ENCODE measurements at regions of chr11 and their contacts with region 1.

Region 1: DNA sequence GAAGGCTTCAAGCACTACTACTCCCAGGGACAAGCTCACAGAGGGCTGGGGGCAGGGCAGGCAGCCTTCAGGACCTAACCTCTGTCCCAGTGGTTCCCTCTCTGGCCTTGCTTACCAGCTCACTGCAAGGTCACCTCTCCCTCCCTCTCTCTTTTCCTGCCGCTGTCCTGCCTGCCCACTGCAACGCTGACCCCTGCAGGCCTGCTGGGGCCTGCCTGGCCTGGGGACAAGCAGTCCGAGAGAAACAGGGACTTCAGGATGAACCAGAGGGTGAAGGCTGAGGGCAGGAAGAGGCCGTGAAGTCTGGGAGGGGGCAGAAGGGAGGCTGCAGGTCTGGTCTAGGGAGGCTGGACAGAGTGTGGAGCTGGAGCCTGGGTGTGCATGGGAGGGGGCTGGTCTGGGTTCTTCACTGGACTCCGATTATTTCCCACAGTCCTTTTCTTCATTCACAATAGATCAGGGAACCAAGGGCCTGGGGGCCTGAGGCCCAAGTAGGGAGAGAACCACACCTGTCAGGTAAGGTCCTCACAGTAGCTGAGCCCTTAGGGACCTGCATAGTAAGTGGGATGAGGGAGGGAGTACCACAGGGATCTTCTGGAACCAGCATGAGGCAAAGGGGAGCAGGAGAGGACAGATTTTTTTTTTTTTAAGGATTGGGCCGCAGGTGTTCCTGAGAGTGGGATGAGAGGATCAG is 3.0 kb downstream of the SYT7 start:
- DNase-seq: no peak
- H3K4me3 ChIP-seq: no peak overlapping the region
- H3K27ac ChIP-seq: no peak overlapping the region
- H3K4me1 ChIP-seq: peaks cover 0 to 15% (median 5%) of the 10 kb centered on the region in 4 experiments
- H3K27me3 ChIP-seq: peaks cover 0 to 52% (median 27%) of the 10 kb centered on the region in 5 experiments

Region 2: DNA sequence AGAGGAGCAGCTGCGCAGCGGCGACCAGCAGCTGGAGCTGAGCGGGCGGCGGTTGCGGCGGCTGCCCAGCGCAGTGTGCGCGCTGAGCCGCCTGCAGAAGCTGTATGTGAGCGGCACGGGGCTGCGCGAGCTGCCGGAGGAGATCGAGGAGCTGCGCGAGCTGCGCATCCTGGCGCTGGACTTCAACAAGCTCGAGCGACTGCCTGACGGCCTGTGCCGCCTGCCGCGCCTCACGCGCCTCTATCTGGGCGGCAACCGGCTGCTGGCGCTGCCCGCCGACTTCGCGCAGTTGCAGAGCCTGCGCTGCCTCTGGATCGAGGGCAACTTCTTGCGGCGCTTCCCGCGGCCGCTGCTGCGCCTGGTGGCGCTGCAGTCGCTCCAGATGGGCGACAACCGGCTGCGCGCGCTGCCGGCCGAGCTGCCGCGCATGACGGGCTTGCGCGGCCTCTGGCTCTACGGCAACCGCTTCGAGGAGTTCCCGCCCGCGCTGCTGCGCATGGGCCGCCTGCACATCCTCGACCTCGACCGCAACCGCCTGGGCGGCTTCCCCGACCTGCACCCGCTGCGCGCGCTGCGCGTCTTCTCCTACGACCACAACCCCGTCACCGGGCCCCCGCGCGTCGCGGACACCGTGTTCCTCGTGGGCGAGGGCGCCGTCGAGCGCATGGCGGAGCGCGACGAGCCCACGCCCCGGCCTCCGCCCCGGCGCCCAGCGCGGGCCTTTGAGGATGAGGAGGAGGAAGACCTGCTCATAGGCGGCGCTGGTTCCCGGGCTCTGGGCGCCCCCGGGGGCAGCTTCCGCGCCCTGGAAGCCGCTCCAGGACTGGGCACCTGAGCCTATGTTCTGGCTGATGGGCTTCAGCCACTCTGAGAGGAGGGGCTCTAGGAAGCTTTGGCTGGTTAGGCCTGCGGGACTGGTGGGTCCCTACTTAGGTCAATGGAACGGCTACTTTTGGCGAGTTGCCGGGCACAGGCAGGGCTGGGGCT is 68.5 kb before region 1 on chr11:
- CTCF ChIA-PET with region 1: no interaction called
- POLR2A ChIA-PET with region 1: no interaction called
- DNase-seq: peak; percentile 88 to 94 (median 94)
- H3K4me3 ChIP-seq: peak overlapping the region in 4 of 7 experiments; percentile 26 to 63 (median 45)
- H3K27ac ChIP-seq: no peak overlapping the region
- H3K4me1 ChIP-seq: peaks cover 0 to 22% (median 19%) of the 10 kb centered on the region in 4 experiments
- H3K27me3 ChIP-seq: peaks cover 2 to 66% (median 36%) of the 10 kb centered on the region in 5 experiments

Region 3: GRCh38 chr11:61567286-61568061 is 10.4 kb before region 1 on chr11:
- CTCF ChIA-PET with region 1: interaction called, 11 read pairs
- POLR2A ChIA-PET with region 1: no interaction called
- DNase-seq: peak; percentile 83 to 92 (median 88)
- H3K4me3 ChIP-seq: peak overlapping the region in 1 of 7 experiments; percentile 40
- H3K27ac ChIP-seq: no peak overlapping the region
- H3K4me1 ChIP-seq: no peaks in the 10 kb centered on the region
- H3K27me3 ChIP-seq: peaks cover 0 to 81% (median 19%) of the 10 kb centered on the region in 5 experiments

Measured in common myeloid progenitor, CD34-positive (primary cell).